Activated CD8-positive, alpha-beta T cell treated with anti-CD3 and anti-CD28 coated beads, Interleukin-2, amount 10 ng/mL, durations not matched to agents 7 days and 5 days (primary cell): ENCODE measurements at regions of chr16 and their contacts with region 1.

Region 1: GRCh38 chr16:70438969-70439862 is at the start of gene ST3GAL2:
- DNase-seq: peak; percentile 96
- ATAC-seq: peak; percentile 93
- H3K4me3 Mint-ChIP-seq: peak within 1 kb of the TSS; percentile 88
- H3K27ac Mint-ChIP-seq: peak within 1 kb of the TSS; percentile 91
- H3K4me1 Mint-ChIP-seq: peaks cover 35% of the 10 kb centered on the region
- H3K27me3 Mint-ChIP-seq: no peaks in the 10 kb centered on the region
- total RNA-seq, gene ST3GAL2: 34.1 to 39.0 TPM

Region 2: DNA sequence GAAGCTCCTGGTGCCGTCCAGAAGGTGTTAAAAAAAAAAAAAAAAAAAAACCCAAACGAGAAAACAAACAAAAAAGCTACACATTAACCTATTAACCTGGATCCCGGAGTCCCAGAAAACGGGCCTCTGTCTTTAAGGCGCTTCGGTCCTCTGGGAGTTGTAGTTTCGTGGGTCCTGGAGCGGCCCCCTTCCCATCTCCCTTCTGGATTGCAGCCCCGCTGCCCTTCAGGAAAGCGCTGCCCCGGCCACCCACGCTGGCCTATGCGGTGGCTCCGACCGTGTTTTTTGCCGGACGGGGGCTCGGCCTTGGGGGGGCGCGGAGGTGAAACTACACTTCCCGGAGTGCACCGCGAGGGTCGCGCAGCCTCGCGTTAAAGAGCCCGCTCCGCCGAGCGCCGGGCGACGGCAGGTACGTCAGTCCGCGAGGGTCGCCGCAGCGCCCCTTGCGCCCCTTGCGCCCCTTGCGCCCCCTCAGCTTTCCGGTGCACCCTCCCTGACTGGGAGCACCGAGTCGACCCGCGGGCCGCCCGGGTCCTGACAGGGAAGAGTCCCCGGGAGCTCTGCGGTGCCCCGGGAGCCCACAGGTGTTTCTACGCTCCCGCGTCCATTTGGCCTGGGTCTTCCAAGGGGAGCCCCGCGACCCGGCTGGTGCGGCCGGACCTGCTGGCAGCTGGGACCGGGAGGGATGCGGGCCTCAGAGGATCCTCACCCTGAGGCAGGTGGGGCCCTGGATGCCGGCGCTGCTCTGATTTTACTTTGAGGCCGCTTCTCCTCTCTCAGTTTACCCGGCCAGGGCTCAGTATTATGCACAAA is 15.2 kb after region 1 on chr16 and contains the start of gene FCSK:
- CTCF ChIA-PET with region 1: interaction called, 12 read pairs
- POLR2A ChIA-PET with region 1: no interaction called
- DNase-seq: peak; percentile 70
- ATAC-seq: peak; percentile 96
- H3K4me3 Mint-ChIP-seq: peak within 1 kb of the TSS; percentile 86
- H3K27ac Mint-ChIP-seq: peak within 1 kb of the TSS; percentile 93
- H3K4me1 Mint-ChIP-seq: peaks cover 18% of the 10 kb centered on the region
- H3K27me3 Mint-ChIP-seq: no peaks in the 10 kb centered on the region
- total RNA-seq, gene FCSK: 17.3 to 18.8 TPM